GM10248 (cell line): ENCODE measurements at regions of chr15 and their contacts with region 1.

Region 1: DNA sequence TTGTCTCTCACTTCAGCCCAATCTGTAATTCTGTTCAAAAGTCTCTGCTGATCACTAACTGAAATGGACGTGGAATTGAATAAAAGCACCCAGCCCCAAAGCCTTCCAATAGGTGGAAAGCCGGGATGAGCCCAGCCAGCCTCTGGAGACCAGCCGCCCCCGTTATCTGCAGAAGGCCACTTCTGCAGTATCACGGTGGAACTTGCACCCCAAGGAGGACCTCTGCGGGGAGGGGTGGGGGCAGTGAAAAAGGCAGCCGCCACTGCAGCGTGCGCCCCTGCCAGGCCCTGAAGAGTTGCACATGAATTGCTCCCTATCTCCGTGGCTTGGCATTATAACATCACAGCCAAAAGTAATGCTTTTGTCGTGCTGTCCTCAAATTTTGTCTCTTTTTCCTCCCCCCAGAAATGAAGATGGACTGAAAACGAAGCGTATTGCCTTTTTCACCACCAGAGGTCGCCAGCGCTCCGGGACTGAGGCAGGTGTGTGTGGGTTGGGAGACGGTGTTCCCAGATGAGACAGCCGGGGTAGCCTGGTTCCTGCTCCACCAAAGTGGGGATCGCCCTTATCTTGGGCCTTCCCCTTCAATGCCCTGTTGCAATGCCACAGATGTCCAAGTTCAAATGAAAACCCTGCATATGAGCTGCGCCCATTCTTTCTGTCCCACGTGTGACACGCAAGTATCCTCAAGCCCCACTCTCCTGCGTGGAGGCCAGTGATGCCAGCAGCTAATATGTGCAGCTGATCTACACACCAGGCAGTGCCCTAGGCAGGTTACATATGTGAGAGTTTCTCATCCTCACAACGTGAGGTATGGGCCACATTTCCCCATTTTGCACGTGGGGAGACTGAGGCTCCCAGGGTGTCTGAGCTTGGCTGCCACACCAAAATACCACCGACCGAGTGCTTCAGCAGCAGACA is 96.0 kb downstream of the LRRK1 start:
- DNase-seq: peak; percentile 79
- CTCF ChIP-seq: peak; percentile 87

Region 2: DNA sequence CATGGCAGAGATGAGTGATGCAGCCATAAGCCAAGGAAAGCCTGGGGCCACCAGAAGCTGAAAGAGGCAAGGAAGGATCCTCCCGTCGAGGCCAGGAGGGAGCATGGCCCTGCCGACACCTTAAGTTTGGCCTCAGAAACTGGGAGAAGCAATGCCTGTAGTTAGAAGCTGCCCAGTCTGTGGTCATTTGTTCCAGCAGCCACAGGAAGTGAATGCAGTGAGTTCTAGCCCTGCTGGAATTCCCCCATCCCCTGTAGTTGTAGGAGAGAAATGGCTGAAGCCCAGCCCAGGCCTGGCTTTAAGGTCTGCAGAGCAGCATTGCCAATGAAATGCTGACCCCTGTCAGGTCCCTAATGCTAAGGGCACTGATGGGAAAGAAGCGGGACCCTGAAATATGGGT is 248.8 kb after region 1 on chr15:
- CTCF ChIA-PET with region 1: interaction called, 23 read pairs
- POLR2A ChIA-PET with region 1: no interaction called
- DNase-seq: peak; percentile 53
- CTCF ChIP-seq: no peak